Esophagus muscularis mucosa (tissue), 4 donors: ENCODE measurements at regions of chr13 and their contacts with region 1.

Region 1: GRCh38 chr13:41222259-41222852 is 28.0 kb upstream of the KBTBD7 start:
- DNase-seq: no peak
- H3K4me3 ChIP-seq: no peak overlapping the region
- H3K27ac ChIP-seq: no peak overlapping the region
- H3K4me1 ChIP-seq: no peaks in the 10 kb centered on the region
- H3K27me3 ChIP-seq: no peaks in the 10 kb centered on the region
- CTCF ChIP-seq: peak; percentile 73 to 86 (median 84)
- EP300 ChIP-seq: no peak
- POLR2A ChIP-seq: no peak

Region 2: GRCh38 chr13:41074523-41074922 is 147.8 kb before region 1 on chr13:
- intact Hi-C with region 1: loop called (anchors 5 kb)
- DNase-seq: no peak
- H3K4me3 ChIP-seq: no peak overlapping the region
- H3K27ac ChIP-seq: no peak overlapping the region
- H3K4me1 ChIP-seq: no peaks in the 10 kb centered on the region
- H3K27me3 ChIP-seq: no peaks in the 10 kb centered on the region
- CTCF ChIP-seq: no peak
- EP300 ChIP-seq: no peak
- POLR2A ChIP-seq: no peak

Region 3: DNA sequence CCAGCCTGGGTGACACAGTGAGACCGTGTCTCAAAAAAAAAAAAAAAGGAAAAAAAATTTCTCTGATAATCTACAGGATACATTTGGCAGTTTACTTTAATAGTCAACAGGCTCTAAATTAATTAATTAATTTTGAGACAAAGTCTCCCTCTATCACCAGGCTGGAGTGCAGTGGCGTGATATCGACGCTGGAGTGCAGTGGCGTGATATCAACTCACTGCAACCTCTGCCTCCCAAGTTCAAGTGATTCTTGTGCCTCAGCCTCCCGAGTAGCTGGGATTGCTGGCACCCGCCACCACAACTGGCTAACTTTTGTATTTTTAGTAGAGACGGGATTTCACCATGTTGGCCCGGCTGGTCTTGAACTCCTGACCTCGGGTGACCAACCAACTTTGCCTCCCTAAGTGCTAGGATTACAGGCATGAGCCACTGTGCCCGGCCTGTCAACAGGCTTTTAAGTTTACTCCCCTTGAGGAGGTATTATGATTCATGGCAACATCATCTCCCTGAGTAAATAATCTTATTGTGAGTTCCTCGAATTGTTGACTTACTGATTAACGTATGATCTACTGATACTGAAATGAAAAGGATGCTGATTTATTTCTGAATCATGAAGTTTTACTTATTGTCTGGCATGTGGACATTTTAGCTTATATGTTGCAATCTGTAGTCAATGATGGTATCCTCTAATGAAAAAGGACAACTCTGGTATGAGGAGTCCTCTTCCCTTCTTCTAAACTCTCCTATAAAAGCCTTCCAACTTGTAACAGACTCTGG is 62.3 kb after region 1 on chr13:
- intact Hi-C with region 1: no loop called
- DNase-seq: no peak
- H3K4me3 ChIP-seq: no peak overlapping the region
- H3K27ac ChIP-seq: no peak overlapping the region
- H3K4me1 ChIP-seq: no peaks in the 10 kb centered on the region
- H3K27me3 ChIP-seq: no peaks in the 10 kb centered on the region
- CTCF ChIP-seq: no peak
- EP300 ChIP-seq: no peak
- POLR2A ChIP-seq: no peak

Region 4: GRCh38 chr13:41310963-41311606 is 88.7 kb after region 1 on chr13 and contains the start of gene NAA16:
- intact Hi-C with region 1: no loop called
- DNase-seq: peak; percentile 96
- H3K4me3 ChIP-seq: peak within 1 kb of the TSS; percentile 87 to 98 (median 92)
- H3K27ac ChIP-seq: peak within 1 kb of the TSS; percentile 91 to 97 (median 94)
- H3K4me1 ChIP-seq: peaks cover 20 to 40% (median 39%) of the 10 kb centered on the region in 4 donors
- H3K27me3 ChIP-seq: no peaks in the 10 kb centered on the region
- CTCF ChIP-seq: no peak
- EP300 ChIP-seq: no peak
- POLR2A ChIP-seq: peak; percentile 64
- total RNA-seq, gene NAA16: 13.8 to 22.0 (median 14.9) TPM

Region 5: DNA sequence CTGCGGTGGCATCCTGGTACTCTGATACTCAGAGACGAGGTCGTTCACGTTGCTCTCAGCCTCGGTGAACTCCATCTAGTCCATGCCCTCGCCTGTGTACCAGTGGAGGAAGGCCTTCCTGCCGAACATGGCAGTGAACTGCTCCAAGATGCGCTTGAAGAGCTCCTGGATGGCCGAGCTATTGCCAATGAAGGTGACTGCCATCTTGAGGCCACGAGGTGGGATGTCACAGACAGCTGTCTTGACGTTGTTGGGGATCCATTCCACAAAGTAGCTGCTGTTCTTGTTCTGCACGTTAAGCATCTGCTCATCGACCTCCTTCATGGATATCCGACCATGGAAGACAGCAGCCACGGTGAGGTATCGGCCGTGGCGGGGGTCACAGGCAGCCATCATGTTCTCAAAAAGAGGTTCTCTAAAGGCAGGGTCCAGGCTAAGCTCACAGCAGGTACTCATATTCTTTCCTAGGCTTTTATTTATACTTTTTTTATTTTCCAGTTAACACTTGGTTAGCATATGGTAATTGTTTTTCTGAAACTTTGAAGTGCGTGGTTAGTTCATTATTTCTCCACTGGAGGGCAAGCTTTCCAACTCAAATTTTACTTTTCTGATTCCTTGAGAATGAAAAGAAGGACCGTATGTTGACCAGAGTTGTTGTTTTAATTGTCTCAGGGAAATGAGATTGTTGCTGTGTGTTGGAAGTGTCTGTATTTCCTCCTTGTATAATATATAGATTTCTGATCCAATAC is 162.6 kb after region 1 on chr13:
- intact Hi-C with region 1: no loop called
- DNase-seq: no peak
- H3K4me3 ChIP-seq: no peak overlapping the region
- H3K27ac ChIP-seq: no peak overlapping the region
- H3K4me1 ChIP-seq: peaks cover 0 to 6% (median 0%) of the 10 kb centered on the region in 4 donors
- H3K27me3 ChIP-seq: no peaks in the 10 kb centered on the region
- CTCF ChIP-seq: peak; percentile 29 to 37 (median 35)
- EP300 ChIP-seq: no peak
- POLR2A ChIP-seq: no peak